ENCODE measurements at regions of chr21 and their contacts with region 1.

Region 1: GRCh38 chr21:36504067-36505058 is 24.4 kb upstream of the CLDN14 start:
- DNase-seq: peak; percentile 24
- H3K4me3 ChIP-seq: no peak overlapping the region
- H3K27ac ChIP-seq: no peak overlapping the region
- H3K27me3 ChIP-seq: peaks cover 9% of the 10 kb centered on the region
- CTCF ChIP-seq: peak; percentile 87

Region 2: GRCh38 chr21:36927719-36928117 is 423.4 kb after region 1 on chr21:
- CTCF ChIA-PET with region 1: interaction called, 11 read pairs
- POLR2A ChIA-PET with region 1: no interaction called
- DNase-seq: peak; percentile 89
- H3K4me3 ChIP-seq: no peak overlapping the region
- H3K27ac ChIP-seq: no peak overlapping the region
- H3K27me3 ChIP-seq: no peaks in the 10 kb centered on the region
- CTCF ChIP-seq: peak; percentile 95